ENCODE measurements at regions of chr2 and their contacts with region 1.

Region 1: DNA sequence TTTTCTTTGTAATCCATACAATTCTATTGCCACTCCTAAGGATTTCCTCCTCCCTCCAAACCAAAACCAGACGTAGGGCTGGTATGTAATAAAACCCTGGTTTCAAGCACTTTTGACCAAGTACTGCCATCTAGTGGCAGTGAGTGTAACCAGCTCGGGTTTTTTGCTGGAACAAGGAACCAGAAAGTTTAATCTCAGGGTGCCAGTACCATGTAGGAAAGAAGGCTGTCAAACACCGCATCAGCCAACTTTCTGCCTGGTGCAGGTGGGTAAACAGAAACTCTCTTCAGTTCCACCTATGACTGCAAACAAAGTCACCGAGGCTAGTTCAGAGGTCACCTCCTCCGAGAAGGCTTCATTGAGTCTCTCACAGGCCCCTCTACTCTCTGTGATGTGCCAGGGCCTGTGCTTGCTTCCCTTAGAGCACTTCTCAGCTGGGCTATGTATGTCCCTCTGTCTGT is 10.2 kb upstream of the THNSL2 start:
- DNase-seq: peak; percentile 77
- H3K4me3 ChIP-seq: no peak overlapping the region
- H3K27ac ChIP-seq: no peak overlapping the region
- H3K4me1 ChIP-seq: no peaks in the 10 kb centered on the region
- H3K27me3 ChIP-seq: no peaks in the 10 kb centered on the region
- CTCF ChIP-seq: peak; percentile 88

Region 2: DNA sequence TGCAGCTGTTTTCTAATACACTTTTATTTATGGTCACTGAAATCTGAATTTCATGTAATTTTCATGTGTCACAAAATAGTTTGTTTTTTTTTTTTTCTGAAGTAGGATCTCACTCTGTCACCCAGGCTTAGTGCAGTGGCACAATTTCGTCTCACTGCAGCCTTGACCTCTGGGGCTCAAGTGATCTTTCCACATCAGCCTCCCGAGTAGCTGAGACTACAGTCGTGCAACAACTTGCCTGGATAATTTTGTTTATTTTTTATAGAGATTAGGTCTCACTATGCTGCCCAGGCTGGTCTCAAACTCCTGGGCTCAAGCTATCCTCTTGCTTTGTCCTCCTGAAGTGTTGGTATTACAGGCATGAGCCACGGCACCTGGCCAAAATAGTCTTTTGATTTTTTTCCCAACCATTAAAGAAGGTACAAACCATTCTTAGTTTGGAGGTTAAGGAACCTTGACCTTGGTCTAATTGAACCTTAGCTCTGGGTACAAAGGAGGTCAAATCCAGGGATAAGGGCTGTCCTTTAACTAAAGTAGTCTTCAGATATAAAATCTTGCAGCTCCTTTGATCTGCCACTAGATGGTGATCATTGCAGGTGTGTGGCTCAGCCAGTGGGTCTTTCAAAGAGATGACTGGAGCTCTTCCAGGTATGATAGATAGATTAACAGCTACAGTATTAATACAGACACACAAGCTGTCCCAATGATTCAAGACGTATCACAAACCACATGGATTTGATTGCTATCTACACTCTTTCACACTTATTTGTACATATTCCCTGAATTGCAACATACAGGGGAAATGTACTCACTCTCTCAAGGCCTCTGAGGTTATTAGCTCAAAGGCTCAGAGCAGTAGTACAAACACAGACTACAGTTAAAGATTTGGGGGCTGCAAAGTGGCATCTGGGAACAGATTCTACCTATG is 99.7 kb before region 1 on chr2:
- CTCF ChIA-PET with region 1: interaction called, 37 read pairs
- POLR2A ChIA-PET with region 1: no interaction called
- intact Hi-C with region 1: loop called (anchors 2 kb)
- DNase-seq: peak; percentile 51
- H3K4me3 ChIP-seq: no peak overlapping the region
- H3K27ac ChIP-seq: no peak overlapping the region
- H3K4me1 ChIP-seq: peaks cover 5% of the 10 kb centered on the region
- H3K27me3 ChIP-seq: no peaks in the 10 kb centered on the region
- CTCF ChIP-seq: peak; percentile 82

Region 3: GRCh38 chr2:88212251-88212790 is 52.3 kb after region 1 on chr2:
- CTCF ChIA-PET with region 1: no interaction called
- POLR2A ChIA-PET with region 1: no interaction called
- intact Hi-C with region 1: no loop called
- DNase-seq: peak; percentile 28
- H3K4me3 ChIP-seq: no peak overlapping the region
- H3K27ac ChIP-seq: no peak overlapping the region
- H3K4me1 ChIP-seq: no peaks in the 10 kb centered on the region
- H3K27me3 ChIP-seq: no peaks in the 10 kb centered on the region
- CTCF ChIP-seq: peak; percentile 50

Region 4: DNA sequence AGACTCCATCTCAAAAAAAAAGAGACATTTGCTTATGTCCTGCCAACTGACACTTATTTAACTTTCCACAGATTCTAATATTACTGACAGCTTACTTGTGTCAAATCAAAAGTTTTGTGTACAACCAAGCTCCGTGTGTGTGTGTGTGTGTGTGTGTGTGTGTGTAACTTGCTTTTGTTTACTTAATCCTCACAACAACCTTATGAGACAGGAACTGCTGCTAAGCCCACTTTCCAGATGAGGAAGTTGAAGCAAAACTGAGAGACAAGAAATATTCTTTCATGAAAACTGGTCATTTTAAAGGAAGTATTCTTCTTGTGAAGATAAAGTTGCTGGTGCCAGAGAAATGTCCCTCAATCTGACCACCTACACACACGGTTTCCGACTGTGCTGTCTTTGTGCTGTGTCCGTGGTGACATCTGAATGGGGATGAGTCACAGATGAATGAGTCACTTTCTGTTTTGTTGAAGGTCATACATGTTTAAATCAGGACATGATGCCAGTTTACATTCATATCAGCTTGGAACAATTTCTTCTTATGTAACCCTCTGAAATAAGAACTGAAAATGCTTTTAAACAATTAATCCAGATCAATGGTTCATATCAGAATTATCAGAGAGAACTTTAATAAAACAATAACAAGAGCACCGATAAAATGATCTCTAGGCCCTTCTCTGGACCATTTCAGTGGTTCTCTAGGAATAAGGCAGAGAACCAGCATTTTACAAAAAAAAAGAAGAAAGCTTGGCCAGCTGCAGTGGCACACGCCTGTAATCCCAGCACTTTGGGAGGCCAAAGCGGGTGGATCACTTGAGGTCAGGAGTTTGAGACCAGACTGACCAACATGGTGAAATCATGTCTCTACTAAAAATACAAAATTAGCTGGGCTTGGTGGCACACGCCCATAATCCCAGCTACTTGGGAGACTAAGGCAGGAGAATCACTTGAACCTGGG is 105.6 kb after region 1 on chr2:
- CTCF ChIA-PET with region 1: no interaction called
- POLR2A ChIA-PET with region 1: no interaction called
- intact Hi-C with region 1: no loop called
- DNase-seq: peak; percentile 52
- H3K4me3 ChIP-seq: no peak overlapping the region
- H3K27ac ChIP-seq: no peak overlapping the region
- H3K4me1 ChIP-seq: no peaks in the 10 kb centered on the region
- H3K27me3 ChIP-seq: no peaks in the 10 kb centered on the region
- CTCF ChIP-seq: no peak

Measured in A673 (cell line).